Naive thymus-derived CD4-positive, alpha-beta T cell (primary cell): ENCODE measurements at regions of chr6 and their contacts with region 1.

Region 1: GRCh38 chr6:26363882-26364701 is 906 bp upstream of the BTN3A2 start:
- DNase-seq: peak in 7 of 9 donors; percentile 22 to 51 (median 45)
- ATAC-seq: peak; percentile 24
- H3K4me3 ChIP-seq: peak overlapping the region; percentile 89
- H3K4me3 Mint-ChIP-seq: no peak overlapping the region
- H3K27ac ChIP-seq: peak overlapping the region; percentile 92
- H3K27ac Mint-ChIP-seq: no peak overlapping the region
- H3K4me1 ChIP-seq: peaks cover 32 to 37% of the 10 kb centered on the region in 2 donors
- H3K4me1 Mint-ChIP-seq: peaks cover 43 to 67% (median 56%) of the 10 kb centered on the region in 7 donors
- H3K27me3 ChIP-seq: no peaks in the 10 kb centered on the region
- H3K27me3 Mint-ChIP-seq: no peaks in the 10 kb centered on the region

Region 2: GRCh38 chr6:25934735-25935306 is 429.3 kb before region 1 on chr6:
- CTCF ChIA-PET with region 1: no interaction called
- POLR2A ChIA-PET with region 1: no interaction called
- intact Hi-C with region 1: no loop called
- DNase-seq: no peak
- ATAC-seq: no peak
- H3K4me3 ChIP-seq: no peak overlapping the region
- H3K4me3 Mint-ChIP-seq: no peak overlapping the region
- H3K27ac ChIP-seq: no peak overlapping the region
- H3K27ac Mint-ChIP-seq: no peak overlapping the region
- H3K4me1 ChIP-seq: no peaks in the 10 kb centered on the region
- H3K4me1 Mint-ChIP-seq: no peaks in the 10 kb centered on the region
- H3K27me3 ChIP-seq: no peaks in the 10 kb centered on the region
- H3K27me3 Mint-ChIP-seq: peaks cover 0 to 10% (median 4%) of the 10 kb centered on the region in 5 donors

Region 3: DNA sequence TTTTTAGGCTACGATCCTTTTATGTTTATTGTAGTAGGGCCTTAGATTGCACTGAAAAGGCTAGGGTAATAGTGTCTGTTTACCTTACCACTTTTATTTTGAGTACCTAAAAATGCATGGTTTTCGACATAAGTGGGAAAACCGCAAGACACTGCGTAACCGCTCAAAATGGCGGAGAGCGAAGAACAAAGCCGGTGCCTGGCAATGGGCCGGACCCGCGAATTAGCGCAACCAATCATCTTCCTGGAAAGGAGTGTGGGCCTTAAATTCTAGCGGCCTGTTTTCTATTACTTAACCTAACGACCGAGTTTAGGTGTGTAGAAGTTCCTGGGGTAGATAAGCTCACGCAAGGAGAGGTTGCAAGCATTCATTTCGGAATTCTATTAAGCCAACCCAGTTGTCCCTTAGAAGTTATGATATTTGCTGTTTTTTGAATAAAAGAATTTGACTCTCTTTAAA is 158.9 kb before region 1 on chr6:
- CTCF ChIA-PET with region 1: no interaction called
- POLR2A ChIA-PET with region 1: no interaction called
- intact Hi-C with region 1: no loop called
- DNase-seq: peak; percentile 50 to 92 (median 89)
- ATAC-seq: peak; percentile 79
- H3K4me3 ChIP-seq: peak overlapping the region; percentile 77
- H3K4me3 Mint-ChIP-seq: no peak overlapping the region
- H3K27ac ChIP-seq: peak overlapping the region; percentile 90
- H3K27ac Mint-ChIP-seq: no peak overlapping the region
- H3K4me1 ChIP-seq: peaks cover 16 to 18% of the 10 kb centered on the region in 2 donors
- H3K4me1 Mint-ChIP-seq: peaks cover 5 to 29% (median 21%) of the 10 kb centered on the region in 7 donors
- H3K27me3 ChIP-seq: no peaks in the 10 kb centered on the region
- H3K27me3 Mint-ChIP-seq: peaks cover 0 to 5% (median 0%) of the 10 kb centered on the region in 5 donors

Region 4: DNA sequence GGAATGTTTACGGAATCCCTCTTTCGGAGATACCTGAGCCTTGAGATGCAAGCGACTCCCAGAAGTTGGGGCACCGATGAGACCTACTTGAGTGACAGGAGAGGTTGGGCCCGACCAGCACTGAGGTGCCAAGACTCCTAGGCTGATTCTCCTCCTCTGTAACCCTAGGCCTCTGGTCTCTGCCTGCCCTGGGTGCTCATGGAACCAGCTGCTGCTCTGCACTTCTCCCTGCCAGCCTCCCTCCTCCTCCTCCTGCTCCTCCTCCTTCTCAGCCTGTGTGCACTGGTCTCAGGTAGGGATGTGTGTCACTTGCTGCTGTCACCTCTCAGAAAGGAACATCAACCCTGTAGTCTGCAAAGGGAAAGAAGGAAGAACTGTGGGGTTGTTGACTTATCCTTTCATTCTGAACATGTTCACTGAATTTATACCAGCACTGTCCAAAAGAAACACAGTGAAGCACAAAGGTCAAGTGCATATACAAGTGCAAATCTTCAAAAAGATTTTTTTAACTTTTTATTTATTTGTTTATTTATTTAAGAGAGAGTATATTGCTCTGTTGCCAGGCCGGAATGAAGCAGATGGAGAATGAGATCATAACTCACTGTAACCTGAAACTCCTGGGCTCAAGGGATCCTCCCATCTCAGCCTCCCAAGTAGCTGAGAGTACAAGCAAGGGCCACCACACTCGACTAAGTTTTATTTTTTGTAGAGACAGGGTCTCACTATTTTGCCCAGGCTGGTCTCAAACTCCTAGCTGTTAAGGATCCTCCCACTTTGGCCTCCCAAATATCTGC is 19.7 kb after region 1 on chr6:
- CTCF ChIA-PET with region 1: interaction called, 6 read pairs
- POLR2A ChIA-PET with region 1: interaction called, 9 read pairs
- intact Hi-C with region 1: loop called in 1 of 2 experiments (anchors 1 kb)
- DNase-seq: peak in 1 of 9 donors; percentile 20
- ATAC-seq: peak; percentile 9
- H3K4me3 ChIP-seq: peak overlapping the region; percentile 83
- H3K4me3 Mint-ChIP-seq: peak overlapping the region; percentile 91 to 100 (median 98)
- H3K27ac ChIP-seq: peak overlapping the region; percentile 96
- H3K27ac Mint-ChIP-seq: peak overlapping the region; percentile 81 to 99 (median 95)
- H3K4me1 ChIP-seq: peaks cover 8 to 16% of the 10 kb centered on the region in 2 donors
- H3K4me1 Mint-ChIP-seq: peaks cover 17 to 57% (median 33%) of the 10 kb centered on the region in 7 donors
- H3K27me3 ChIP-seq: no peaks in the 10 kb centered on the region
- H3K27me3 Mint-ChIP-seq: no peaks in the 10 kb centered on the region

Region 5: GRCh38 chr6:26401987-26402658 is 38.0 kb after region 1 on chr6 and contains the start of gene BTN3A1:
- CTCF ChIA-PET with region 1: no interaction called
- POLR2A ChIA-PET with region 1: interaction called, 4 read pairs
- intact Hi-C with region 1: loop called (anchors 1 kb)
- DNase-seq: peak in 8 of 9 donors; percentile 65 to 85 (median 78)
- ATAC-seq: peak; percentile 93
- H3K4me3 ChIP-seq: peak within 1 kb of the TSS; percentile 95
- H3K4me3 Mint-ChIP-seq: peak within 1 kb of the TSS; percentile 94 to 100 (median 100)
- H3K27ac ChIP-seq: peak within 1 kb of the TSS; percentile 96
- H3K27ac Mint-ChIP-seq: peak within 1 kb of the TSS; percentile 97 to 100 (median 99)
- H3K4me1 ChIP-seq: peaks cover 35 to 37% of the 10 kb centered on the region in 2 donors
- H3K4me1 Mint-ChIP-seq: peaks cover 37 to 58% (median 53%) of the 10 kb centered on the region in 7 donors
- H3K27me3 ChIP-seq: no peaks in the 10 kb centered on the region
- H3K27me3 Mint-ChIP-seq: no peaks in the 10 kb centered on the region
- total RNA-seq, gene BTN3A1: 122 to 242 (median 235) TPM

Region 6: GRCh38 chr6:26439657-26440056 is 75.6 kb after region 1 on chr6:
- CTCF ChIA-PET with region 1: no interaction called
- POLR2A ChIA-PET with region 1: interaction called, 5 read pairs
- intact Hi-C with region 1: loop called (anchors 1 kb)
- DNase-seq: peak in 3 of 9 donors; percentile 7 to 35 (median 15)
- ATAC-seq: no peak
- H3K4me3 ChIP-seq: peak overlapping the region; percentile 94
- H3K4me3 Mint-ChIP-seq: peak overlapping the region; percentile 89 to 100 (median 98)
- H3K27ac ChIP-seq: peak overlapping the region; percentile 99
- H3K27ac Mint-ChIP-seq: peak overlapping the region; percentile 95 to 100 (median 99)
- H3K4me1 ChIP-seq: peaks cover 16 to 19% of the 10 kb centered on the region in 2 donors
- H3K4me1 Mint-ChIP-seq: peaks cover 27 to 52% (median 41%) of the 10 kb centered on the region in 7 donors
- H3K27me3 ChIP-seq: no peaks in the 10 kb centered on the region
- H3K27me3 Mint-ChIP-seq: no peaks in the 10 kb centered on the region

Region 7: GRCh38 chr6:26532699-26533531 is 168.8 kb after region 1 on chr6:
- CTCF ChIA-PET with region 1: no interaction called
- POLR2A ChIA-PET with region 1: interaction called, 11 read pairs
- intact Hi-C with region 1: loop called in 1 of 2 experiments (anchors 2 kb)
- DNase-seq: peak; percentile 67 to 94 (median 93)
- ATAC-seq: peak; percentile 57
- H3K4me3 ChIP-seq: peak overlapping the region; percentile 93
- H3K4me3 Mint-ChIP-seq: peak overlapping the region; percentile 83 to 99 (median 96)
- H3K27ac ChIP-seq: peak overlapping the region; percentile 72
- H3K27ac Mint-ChIP-seq: peak overlapping the region; percentile 88 to 98 (median 97)
- H3K4me1 ChIP-seq: peaks cover 14 to 23% of the 10 kb centered on the region in 2 donors
- H3K4me1 Mint-ChIP-seq: peaks cover 17 to 70% (median 45%) of the 10 kb centered on the region in 7 donors
- H3K27me3 ChIP-seq: no peaks in the 10 kb centered on the region
- H3K27me3 Mint-ChIP-seq: peaks cover 0 to 7% (median 0%) of the 10 kb centered on the region in 5 donors

Region 8: DNA sequence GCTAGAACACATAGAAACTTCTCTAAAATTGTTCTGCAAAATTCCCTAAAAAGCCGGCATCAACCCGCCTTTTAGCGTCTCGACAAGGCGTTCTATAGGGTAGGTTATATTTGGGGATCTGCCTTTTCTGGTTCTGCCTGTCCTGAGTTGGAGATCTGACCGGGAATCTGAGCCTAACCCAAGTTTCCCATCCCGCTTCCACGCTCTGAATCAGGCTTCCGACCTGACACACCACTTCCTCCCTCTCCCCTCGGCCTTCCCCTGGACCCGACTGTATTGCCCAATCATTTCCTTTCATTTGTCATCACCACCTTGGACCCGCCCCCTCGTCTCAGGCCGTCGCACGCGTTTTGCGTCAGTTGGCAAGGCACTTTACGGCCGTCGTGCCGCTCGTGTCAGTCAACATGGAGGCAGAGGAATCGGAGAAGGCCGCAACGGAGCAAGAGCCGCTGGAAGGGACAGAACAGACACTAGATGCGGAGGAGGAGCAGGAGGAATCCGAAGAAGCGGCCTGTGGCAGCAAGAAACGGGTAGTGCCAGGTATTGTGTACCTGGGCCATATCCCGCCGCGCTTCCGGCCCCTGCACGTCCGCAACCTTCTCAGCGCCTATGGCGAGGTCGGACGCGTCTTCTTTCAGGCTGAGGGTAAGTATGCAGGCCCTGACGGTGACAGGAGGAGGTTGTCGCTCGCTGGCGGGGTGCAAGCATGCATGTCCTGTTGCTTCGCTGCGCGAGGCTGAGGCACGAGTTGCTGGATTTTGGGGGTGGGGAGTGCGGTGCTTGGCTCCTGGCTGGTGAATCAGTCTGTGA is 232.7 kb after region 1 on chr6 and contains the start of gene ABT1:
- CTCF ChIA-PET with region 1: interaction called, 3 read pairs
- POLR2A ChIA-PET with region 1: interaction called, 3 read pairs
- intact Hi-C with region 1: loop called in 1 of 2 experiments (anchors 1 kb)
- DNase-seq: peak; percentile 87 to 96 (median 95)
- ATAC-seq: peak; percentile 95
- H3K4me3 ChIP-seq: peak within 1 kb of the TSS; percentile 81
- H3K4me3 Mint-ChIP-seq: no peak within 1 kb of the TSS
- H3K27ac ChIP-seq: peak within 1 kb of the TSS; percentile 89
- H3K27ac Mint-ChIP-seq: peak within 1 kb of the TSS in 1 of 9 donors; percentile 92
- H3K4me1 ChIP-seq: peaks cover 17 to 22% of the 10 kb centered on the region in 2 donors
- H3K4me1 Mint-ChIP-seq: peaks cover 5 to 20% (median 10%) of the 10 kb centered on the region in 7 donors
- H3K27me3 ChIP-seq: peaks cover 8 to 14% of the 10 kb centered on the region in 2 donors
- H3K27me3 Mint-ChIP-seq: peaks cover 3 to 28% (median 16%) of the 10 kb centered on the region in 5 donors
- total RNA-seq, gene ABT1: 23.3 to 37.5 (median 35.0) TPM